ENCODE measurements at regions of chr11 and their contacts with region 1.

Region 1: DNA sequence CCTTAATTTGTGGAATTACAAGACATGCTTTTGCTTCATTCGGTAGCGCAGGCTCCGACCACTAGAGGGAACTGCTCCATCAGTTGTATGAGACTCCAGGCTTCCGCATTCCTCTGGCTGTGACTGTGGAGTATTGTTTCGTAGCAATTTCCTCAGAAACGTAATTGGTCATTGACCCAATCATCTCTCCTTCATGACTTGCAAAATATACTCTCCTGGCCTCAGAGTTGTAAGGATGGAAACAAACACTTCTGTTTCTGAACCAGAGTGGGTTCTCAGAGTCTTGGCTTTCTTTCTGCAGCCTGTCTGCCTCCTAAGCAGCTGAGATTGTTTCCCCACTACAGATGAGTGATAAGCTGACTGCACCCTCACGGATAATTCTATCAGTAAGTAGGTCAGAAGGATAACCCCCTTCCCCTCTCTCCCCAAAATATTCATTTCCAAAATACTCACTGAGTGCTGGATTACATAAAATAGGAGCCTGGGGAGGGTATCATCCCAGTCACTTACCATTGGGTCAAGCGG is 146.8 kb upstream of the ZC3H12C start:
- DNase-seq: peak; percentile 90 to 97 (median 95)
- H3K4me3 ChIP-seq: peak overlapping the region in 1 of 3 experiments; percentile 51
- H3K4me3 Mint-ChIP-seq: peak overlapping the region; percentile 6 to 76
- H3K27ac ChIP-seq: peak overlapping the region; percentile 45 to 91
- H3K27ac Mint-ChIP-seq: peak overlapping the region; percentile 88 to 94 (median 92)
- H3K4me1 ChIP-seq: peaks cover 12 to 18% of the 10 kb centered on the region in 2 donors
- H3K4me1 Mint-ChIP-seq: peaks cover 18% of the 10 kb centered on the region
- H3K27me3 ChIP-seq: no peaks in the 10 kb centered on the region
- H3K27me3 Mint-ChIP-seq: peaks cover 0 to 2% (median 1%) of the 10 kb centered on the region in 3 donors
- CTCF ChIP-seq: peak; percentile 89

Region 2: DNA sequence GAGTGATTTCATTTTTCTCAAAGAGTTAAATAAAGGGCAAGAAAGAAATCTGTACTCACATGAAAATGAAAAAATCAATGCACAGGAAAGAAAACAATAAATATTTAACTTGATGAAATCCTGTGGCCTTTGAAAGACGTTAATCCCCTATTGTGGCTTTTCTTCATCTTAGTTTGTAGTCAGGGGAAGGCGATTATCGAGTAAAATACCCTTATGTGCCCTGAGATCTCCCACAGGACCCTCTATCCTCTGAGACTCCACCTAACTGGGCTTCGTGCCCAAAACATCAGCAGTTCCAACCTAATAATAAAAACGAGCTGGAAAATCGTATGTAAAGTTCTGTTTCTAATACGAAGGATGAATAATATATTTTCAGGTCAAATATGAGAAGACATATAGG is 61.4 kb before region 1 on chr11:
- intact Hi-C with region 1: no loop called
- DNase-seq: no peak
- H3K4me3 ChIP-seq: no peak overlapping the region
- H3K4me3 Mint-ChIP-seq: no peak overlapping the region
- H3K27ac ChIP-seq: no peak overlapping the region
- H3K27ac Mint-ChIP-seq: no peak overlapping the region
- H3K4me1 ChIP-seq: no peaks in the 10 kb centered on the region
- H3K4me1 Mint-ChIP-seq: no peaks in the 10 kb centered on the region
- H3K27me3 ChIP-seq: no peaks in the 10 kb centered on the region
- H3K27me3 Mint-ChIP-seq: peaks cover 0 to 3% (median 2%) of the 10 kb centered on the region in 3 donors
- CTCF ChIP-seq: no peak

Region 3: GRCh38 chr11:109984634-109985289 is 38.4 kb after region 1 on chr11:
- intact Hi-C with region 1: loop called in 1 of 2 experiments (anchors 5 kb)
- DNase-seq: peak; percentile 48 to 80 (median 79)
- H3K4me3 ChIP-seq: peak overlapping the region in 2 of 3 experiments; percentile 35 to 54
- H3K4me3 Mint-ChIP-seq: peak overlapping the region in 1 of 2 donors; percentile 40
- H3K27ac ChIP-seq: peak overlapping the region; percentile 32 to 81
- H3K27ac Mint-ChIP-seq: peak overlapping the region; percentile 77 to 88 (median 83)
- H3K4me1 ChIP-seq: peaks cover 15 to 17% of the 10 kb centered on the region in 2 donors
- H3K4me1 Mint-ChIP-seq: peaks cover 14% of the 10 kb centered on the region
- H3K27me3 ChIP-seq: no peaks in the 10 kb centered on the region
- H3K27me3 Mint-ChIP-seq: no peaks in the 10 kb centered on the region
- CTCF ChIP-seq: no peak

Region 4: GRCh38 chr11:110000031-110000502 is 53.7 kb after region 1 on chr11:
- intact Hi-C with region 1: loop called in 1 of 2 experiments (anchors 5 kb)
- DNase-seq: peak; percentile 71 to 91 (median 81)
- H3K4me3 ChIP-seq: no peak overlapping the region
- H3K4me3 Mint-ChIP-seq: no peak overlapping the region
- H3K27ac ChIP-seq: peak overlapping the region in 1 of 2 donors; percentile 14
- H3K27ac Mint-ChIP-seq: peak overlapping the region in 3 of 7 donors; percentile 12 to 60 (median 36)
- H3K4me1 ChIP-seq: peaks cover 2 to 6% of the 10 kb centered on the region in 2 donors
- H3K4me1 Mint-ChIP-seq: peaks cover 10% of the 10 kb centered on the region
- H3K27me3 ChIP-seq: no peaks in the 10 kb centered on the region
- H3K27me3 Mint-ChIP-seq: peaks cover 0 to 3% (median 2%) of the 10 kb centered on the region in 3 donors
- CTCF ChIP-seq: no peak

Region 5: GRCh38 chr11:110086892-110087309 is 140.5 kb after region 1 on chr11:
- intact Hi-C with region 1: loop called in 1 of 2 experiments (anchors 5 kb)
- DNase-seq: peak; percentile 91 to 99 (median 91)
- H3K4me3 ChIP-seq: no peak overlapping the region
- H3K4me3 Mint-ChIP-seq: no peak overlapping the region
- H3K27ac ChIP-seq: peak overlapping the region; percentile 14 to 71
- H3K27ac Mint-ChIP-seq: peak overlapping the region; percentile 37 to 90 (median 81)
- H3K4me1 ChIP-seq: peaks cover 6 to 13% of the 10 kb centered on the region in 2 donors
- H3K4me1 Mint-ChIP-seq: peaks cover 18% of the 10 kb centered on the region
- H3K27me3 ChIP-seq: no peaks in the 10 kb centered on the region
- H3K27me3 Mint-ChIP-seq: peaks cover 0 to 9% (median 4%) of the 10 kb centered on the region in 3 donors
- CTCF ChIP-seq: no peak

Region 6: DNA sequence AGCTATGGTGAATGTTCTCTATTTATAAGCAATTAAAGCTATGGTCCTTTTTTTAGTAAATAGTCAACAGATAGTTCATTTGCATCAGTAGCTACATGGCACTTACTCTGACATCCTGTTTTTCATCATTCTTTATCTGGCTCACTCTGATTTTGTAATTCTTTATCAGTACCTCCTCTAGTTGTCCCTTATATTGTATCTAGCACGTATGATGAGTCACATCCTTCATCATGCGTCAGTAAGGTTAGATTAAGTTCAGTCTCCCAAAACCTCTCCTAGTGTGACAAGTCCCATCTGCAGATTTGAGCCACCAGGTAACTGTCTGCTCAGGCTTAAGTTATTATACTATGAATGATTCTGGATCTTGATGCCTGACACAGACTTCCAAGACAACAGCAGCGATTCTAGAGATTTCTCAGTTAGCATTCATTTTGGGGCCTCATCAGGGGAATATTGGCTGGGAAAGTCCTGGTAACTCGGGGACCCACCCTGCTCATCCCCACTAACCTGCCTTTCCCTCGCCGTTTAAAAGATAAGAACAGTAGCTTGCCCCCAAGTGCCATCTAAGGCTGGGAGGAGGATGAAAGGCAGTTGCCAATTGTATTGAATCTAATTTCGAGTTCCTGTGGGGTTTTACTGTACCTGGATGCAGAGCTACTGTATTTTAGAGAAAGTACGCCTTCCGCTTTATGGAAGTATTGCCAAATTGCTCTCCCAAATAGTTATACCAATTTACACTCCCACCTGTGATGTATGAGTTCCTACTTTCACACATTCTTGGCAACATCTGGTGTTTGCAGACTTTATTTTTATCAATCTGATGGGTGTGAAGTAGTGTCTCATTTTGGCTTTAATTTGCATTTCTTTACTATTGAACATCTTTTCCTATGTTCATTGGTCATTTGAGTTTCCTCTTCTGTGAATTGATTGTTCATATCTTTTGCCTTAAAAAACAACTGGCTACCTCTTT is 202.7 kb after region 1 on chr11:
- intact Hi-C with region 1: no loop called
- DNase-seq: peak; percentile 4 to 58 (median 7)
- H3K4me3 ChIP-seq: no peak overlapping the region
- H3K4me3 Mint-ChIP-seq: no peak overlapping the region
- H3K27ac ChIP-seq: no peak overlapping the region
- H3K27ac Mint-ChIP-seq: peak overlapping the region in 3 of 7 donors; percentile 19 to 55 (median 25)
- H3K4me1 ChIP-seq: peaks cover 3 to 7% of the 10 kb centered on the region in 2 donors
- H3K4me1 Mint-ChIP-seq: peaks cover 17% of the 10 kb centered on the region
- H3K27me3 ChIP-seq: no peaks in the 10 kb centered on the region
- H3K27me3 Mint-ChIP-seq: no peaks in the 10 kb centered on the region
- CTCF ChIP-seq: no peak

Region 7: GRCh38 chr11:110173811-110174644 is 227.6 kb after region 1 on chr11:
- intact Hi-C with region 1: no loop called
- DNase-seq: peak; percentile 33 to 54 (median 38)
- H3K4me3 ChIP-seq: no peak overlapping the region
- H3K4me3 Mint-ChIP-seq: peak overlapping the region; percentile 59 to 63
- H3K27ac ChIP-seq: no peak overlapping the region
- H3K27ac Mint-ChIP-seq: no peak overlapping the region
- H3K4me1 ChIP-seq: peaks cover 7% of the 10 kb centered on the region in 2 donors
- H3K4me1 Mint-ChIP-seq: peaks cover 8% of the 10 kb centered on the region
- H3K27me3 ChIP-seq: no peaks in the 10 kb centered on the region
- H3K27me3 Mint-ChIP-seq: peaks cover 5 to 6% (median 5%) of the 10 kb centered on the region in 3 donors
- CTCF ChIP-seq: peak; percentile 88

Region 8: GRCh38 chr11:110296226-110297075 is 350.1 kb after region 1 on chr11 and contains the start of gene RDX:
- intact Hi-C with region 1: loop called in 1 of 2 experiments (anchors 10 kb)
- DNase-seq: peak; percentile 51 to 72 (median 69)
- H3K4me3 ChIP-seq: peak within 1 kb of the TSS; percentile 67 to 89 (median 82)
- H3K4me3 Mint-ChIP-seq: peak within 1 kb of the TSS; percentile 88 to 93
- H3K27ac ChIP-seq: peak within 1 kb of the TSS; percentile 70 to 85
- H3K27ac Mint-ChIP-seq: peak within 1 kb of the TSS; percentile 72 to 92 (median 86)
- H3K4me1 ChIP-seq: peaks cover 36 to 37% of the 10 kb centered on the region in 2 donors
- H3K4me1 Mint-ChIP-seq: peaks cover 33% of the 10 kb centered on the region
- H3K27me3 ChIP-seq: no peaks in the 10 kb centered on the region
- H3K27me3 Mint-ChIP-seq: peaks cover 0 to 5% (median 3%) of the 10 kb centered on the region in 3 donors
- CTCF ChIP-seq: no peak
- polyA plus RNA-seq, gene RDX: 11.9 to 22.0 (median 20.9) TPM